HEK293 (cell line): ENCODE measurements at regions of chr17 and their contacts with region 1.

Region 1: DNA sequence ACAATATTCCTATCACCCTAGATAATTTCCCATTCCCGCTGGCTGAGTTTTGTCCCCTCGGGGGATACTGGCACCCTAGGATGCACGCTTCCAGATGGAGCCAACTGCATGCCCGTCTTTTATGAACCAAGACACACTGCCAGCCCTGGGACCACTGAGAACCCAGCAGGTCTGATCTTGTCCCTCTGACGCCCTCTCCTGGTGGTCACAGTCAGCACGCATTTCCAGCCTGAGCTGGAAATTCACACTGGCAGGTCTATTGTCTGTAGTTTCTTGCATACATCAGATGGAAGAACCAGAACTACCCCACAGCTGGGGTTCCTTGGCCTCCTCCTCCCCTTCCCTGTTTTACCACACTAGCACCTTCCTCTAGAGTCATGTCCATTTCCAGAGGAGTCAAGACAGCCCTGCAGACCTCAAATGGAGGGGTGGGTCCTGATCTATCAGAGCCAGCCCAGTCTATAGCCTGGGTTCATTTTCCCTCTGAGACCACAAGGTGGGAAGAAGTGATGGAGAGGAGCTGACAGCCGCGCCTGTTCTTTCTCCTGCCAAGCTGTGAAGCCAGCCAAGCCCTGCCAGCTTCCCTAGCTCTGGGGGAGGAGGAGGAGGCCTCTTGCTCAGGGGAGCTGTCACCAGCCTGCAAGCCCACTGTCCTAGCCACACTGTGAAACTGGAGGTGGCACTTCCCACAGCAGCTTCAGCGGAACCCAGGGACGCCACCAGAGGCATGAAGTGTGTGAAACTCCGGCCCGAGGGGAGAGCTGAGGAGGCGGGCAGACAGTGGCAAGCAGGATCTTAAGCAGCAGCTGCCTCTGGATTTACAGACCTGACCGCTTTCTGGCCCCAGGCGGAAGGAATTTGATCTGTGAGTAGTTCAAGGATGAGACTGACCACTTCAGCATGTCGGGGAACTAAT is 29.3 kb downstream of the MXRA7 start:
- H3K4me3 ChIP-seq: no peak overlapping the region
- H3K27ac ChIP-seq: no peak overlapping the region
- H3K4me1 ChIP-seq: no peaks in the 10 kb centered on the region
- CTCF ChIP-seq: peak; percentile 88

Region 2: DNA sequence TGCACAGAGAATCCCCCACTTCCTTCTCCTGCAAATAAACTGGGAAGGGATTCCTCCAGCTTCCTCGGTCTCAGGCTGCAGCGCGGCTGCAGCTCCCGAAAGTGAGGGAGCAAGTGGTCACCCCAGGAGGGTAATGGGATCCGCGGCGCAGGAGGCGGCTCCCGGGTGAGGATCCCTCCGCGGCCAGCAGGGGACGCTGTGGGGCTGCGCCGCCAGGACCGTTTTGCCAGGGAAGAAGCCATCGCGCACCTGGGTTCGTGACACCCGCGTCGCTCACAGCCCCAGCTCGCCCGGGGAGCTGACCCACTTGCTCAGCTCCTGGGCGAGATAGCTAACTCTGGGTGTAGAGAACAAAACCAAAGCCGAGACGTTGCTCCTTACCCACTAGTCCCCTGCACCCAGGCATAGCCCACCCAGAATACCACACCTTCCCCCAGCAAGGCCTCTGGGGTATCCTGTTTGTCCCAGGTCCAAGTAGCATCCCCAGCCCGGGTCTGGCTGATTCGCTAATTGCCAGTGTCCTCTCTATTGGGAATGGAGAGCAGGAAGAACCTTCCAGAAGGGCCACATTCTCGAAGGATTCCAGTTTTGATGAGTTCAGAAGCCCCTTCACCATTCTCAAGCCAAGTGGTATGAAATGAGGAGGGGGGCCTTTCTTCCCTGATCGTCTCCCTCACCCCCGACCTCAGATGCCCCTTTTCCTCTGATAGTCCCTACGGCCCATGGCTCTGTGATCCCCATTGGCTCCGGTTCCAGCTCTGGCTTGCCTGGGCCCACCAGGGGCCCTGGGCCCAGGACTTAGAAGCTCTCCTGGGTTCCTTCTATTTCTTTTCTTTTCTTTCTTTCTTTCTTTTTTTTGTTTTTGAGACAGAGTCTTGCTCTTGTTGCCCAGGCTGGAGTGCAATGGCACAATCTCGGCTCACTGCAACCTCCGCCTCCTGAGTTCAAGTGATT is 158.1 kb before region 1 on chr17:
- CTCF ChIA-PET with region 1: interaction called, 57 read pairs
- POLR2A ChIA-PET with region 1: interaction called, 3 read pairs
- H3K4me3 ChIP-seq: no peak overlapping the region
- H3K27ac ChIP-seq: no peak overlapping the region
- H3K4me1 ChIP-seq: peaks cover 8% of the 10 kb centered on the region
- CTCF ChIP-seq: peak; percentile 98

Region 3: GRCh38 chr17:76557368-76558197 is 123.9 kb before region 1 on chr17:
- CTCF ChIA-PET with region 1: interaction called, 69 read pairs
- POLR2A ChIA-PET with region 1: interaction called, 6 read pairs
- H3K4me3 ChIP-seq: peak overlapping the region; percentile 93
- H3K27ac ChIP-seq: peak overlapping the region; percentile 82
- H3K4me1 ChIP-seq: peaks cover 20% of the 10 kb centered on the region
- CTCF ChIP-seq: peak; percentile 97

Region 4: GRCh38 chr17:76612977-76613851 is 68.3 kb before region 1 on chr17:
- CTCF ChIA-PET with region 1: interaction called, 13 read pairs
- POLR2A ChIA-PET with region 1: no interaction called
- H3K4me3 ChIP-seq: no peak overlapping the region
- H3K27ac ChIP-seq: no peak overlapping the region
- H3K4me1 ChIP-seq: 0 out of 2 replicates have a peak, but pooled peaks cover 3% of the 10 kb centered on the region
- CTCF ChIP-seq: no peak

Region 5: GRCh38 chr17:76671123-76671911 is 10.2 kb before region 1 on chr17:
- CTCF ChIA-PET with region 1: interaction called, 28 read pairs
- POLR2A ChIA-PET with region 1: interaction called, 15 read pairs
- H3K4me3 ChIP-seq: peak overlapping the region; percentile 71
- H3K27ac ChIP-seq: peak overlapping the region; percentile 97
- H3K4me1 ChIP-seq: peaks cover 36% of the 10 kb centered on the region
- CTCF ChIP-seq: peak; percentile 62

Region 6: DNA sequence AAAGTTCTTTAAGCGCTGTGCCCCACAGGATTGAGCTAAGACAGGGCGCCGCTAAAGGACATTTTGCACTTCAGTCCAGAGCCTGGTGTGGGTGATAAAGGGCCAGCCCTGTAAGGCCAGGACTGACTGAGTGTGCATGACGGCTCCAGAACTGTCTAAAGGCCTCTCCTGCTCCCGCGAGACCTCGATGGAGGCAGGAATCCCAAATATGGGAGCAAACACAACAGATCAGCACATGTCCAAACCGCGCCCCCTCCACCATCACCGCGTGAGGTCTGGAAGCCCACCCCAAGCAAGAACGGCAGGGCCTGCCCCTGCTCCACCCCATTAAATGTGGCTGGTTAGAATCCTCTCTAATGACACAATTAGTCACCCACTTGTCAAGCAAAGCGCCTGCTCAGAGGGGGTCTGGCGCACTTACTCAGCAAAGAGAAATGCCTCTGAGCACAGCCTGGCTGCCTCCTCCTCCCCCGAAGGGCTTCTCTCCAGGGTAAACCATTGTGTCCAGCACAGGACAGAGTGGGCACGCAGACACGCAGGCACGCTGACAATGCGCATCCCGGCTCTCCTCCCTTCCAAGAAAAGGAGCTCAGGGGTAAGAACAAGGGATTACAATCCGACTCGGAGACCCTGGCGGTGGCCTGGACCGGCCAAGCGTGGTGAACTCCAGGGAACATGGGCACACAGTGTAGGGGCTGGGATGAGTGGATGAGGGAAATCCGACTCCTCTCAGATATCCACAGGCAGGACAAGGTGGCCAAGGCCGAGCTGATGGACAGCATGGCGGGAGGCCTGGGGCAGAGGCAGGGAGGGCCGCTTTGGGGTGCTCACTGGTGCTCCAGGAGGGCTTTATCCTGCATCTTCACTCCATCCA is 27.8 kb after region 1 on chr17:
- CTCF ChIA-PET with region 1: interaction called, 175 read pairs
- POLR2A ChIA-PET with region 1: interaction called, 7 read pairs
- H3K4me3 ChIP-seq: peak overlapping the region; percentile 65
- H3K27ac ChIP-seq: peak overlapping the region; percentile 87
- H3K4me1 ChIP-seq: peaks cover 27% of the 10 kb centered on the region
- CTCF ChIP-seq: no peak

Region 7: GRCh38 chr17:76816590-76817135 is 135.2 kb after region 1 on chr17:
- CTCF ChIA-PET with region 1: no interaction called
- POLR2A ChIA-PET with region 1: no interaction called
- H3K4me3 ChIP-seq: no peak overlapping the region
- H3K27ac ChIP-seq: no peak overlapping the region
- H3K4me1 ChIP-seq: no peaks in the 10 kb centered on the region; the same call in 1 of the 2 replicates
- CTCF ChIP-seq: peak; percentile 57; the same call in 1 of the 2 replicates